Activated CD8-positive, alpha-beta memory T cell treated with anti-CD3 and anti-CD28 coated beads, Interleukin-2, amount 10 ng/mL, durations not matched to agents 7 days and 5 days (primary cell): ENCODE measurements at regions of chr6 and their contacts with region 1.

Region 1: DNA sequence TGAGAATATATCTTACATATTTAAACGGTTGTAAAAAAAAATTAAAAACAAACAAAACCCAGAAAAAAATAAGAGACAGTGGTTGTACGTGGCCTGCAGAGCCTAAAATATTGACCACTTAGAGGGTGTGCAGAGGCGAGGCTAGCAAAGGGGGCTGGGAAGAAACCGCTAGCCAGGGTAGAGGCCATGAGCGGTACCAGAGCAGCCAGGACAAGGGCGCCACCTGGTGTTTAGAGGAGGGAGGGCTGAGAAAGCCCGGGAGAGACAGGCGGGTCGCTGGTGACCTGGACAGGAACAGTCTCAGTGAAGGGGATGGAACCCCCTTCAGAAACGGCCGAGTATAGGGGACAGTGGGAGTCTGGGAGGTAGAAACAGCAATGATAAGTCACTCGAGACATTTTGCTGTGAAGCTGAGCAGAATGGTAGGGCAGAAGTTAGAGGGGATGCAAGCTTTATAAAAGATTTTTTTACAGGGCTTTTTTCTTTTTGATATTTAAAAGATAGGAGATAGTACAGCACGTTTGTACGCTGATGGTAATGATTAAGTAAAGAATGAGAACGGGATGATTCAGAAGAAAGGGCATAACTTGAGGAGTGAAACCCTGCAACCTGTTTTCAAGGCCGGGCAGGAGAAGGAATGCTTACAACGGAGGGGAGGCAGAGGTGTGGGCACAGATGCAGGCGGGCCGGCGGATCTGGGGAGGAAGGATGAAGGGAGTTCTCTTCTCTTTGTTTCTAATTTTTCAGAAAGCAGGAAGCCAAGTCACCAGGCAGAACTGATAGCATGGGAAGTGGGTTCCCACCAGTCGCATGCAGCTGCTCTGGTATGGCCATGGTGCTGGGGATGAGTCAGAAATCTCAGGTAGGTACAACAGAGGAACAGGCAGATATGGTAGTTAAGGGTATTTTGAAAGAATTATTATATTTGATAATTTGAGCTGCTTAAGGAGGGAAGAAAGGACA is 76.2 kb downstream of the FAM229B start:
- DNase-seq: peak; percentile 85
- ATAC-seq: peak; percentile 96
- H3K4me3 Mint-ChIP-seq: peak overlapping the region; percentile 45
- H3K27ac Mint-ChIP-seq: peak overlapping the region; percentile 30
- H3K4me1 Mint-ChIP-seq: peaks cover 20% of the 10 kb centered on the region
- H3K27me3 Mint-ChIP-seq: peaks cover 61% of the 10 kb centered on the region

Region 2: GRCh38 chr6:111382476-111383300 is 780.9 kb before region 1 on chr6:
- CTCF ChIA-PET with region 1: no interaction called
- DNase-seq: no peak
- ATAC-seq: no peak
- H3K4me3 Mint-ChIP-seq: no peak overlapping the region
- H3K27ac Mint-ChIP-seq: no peak overlapping the region
- H3K4me1 Mint-ChIP-seq: peaks cover 18% of the 10 kb centered on the region
- H3K27me3 Mint-ChIP-seq: no peaks in the 10 kb centered on the region

Region 3: DNA sequence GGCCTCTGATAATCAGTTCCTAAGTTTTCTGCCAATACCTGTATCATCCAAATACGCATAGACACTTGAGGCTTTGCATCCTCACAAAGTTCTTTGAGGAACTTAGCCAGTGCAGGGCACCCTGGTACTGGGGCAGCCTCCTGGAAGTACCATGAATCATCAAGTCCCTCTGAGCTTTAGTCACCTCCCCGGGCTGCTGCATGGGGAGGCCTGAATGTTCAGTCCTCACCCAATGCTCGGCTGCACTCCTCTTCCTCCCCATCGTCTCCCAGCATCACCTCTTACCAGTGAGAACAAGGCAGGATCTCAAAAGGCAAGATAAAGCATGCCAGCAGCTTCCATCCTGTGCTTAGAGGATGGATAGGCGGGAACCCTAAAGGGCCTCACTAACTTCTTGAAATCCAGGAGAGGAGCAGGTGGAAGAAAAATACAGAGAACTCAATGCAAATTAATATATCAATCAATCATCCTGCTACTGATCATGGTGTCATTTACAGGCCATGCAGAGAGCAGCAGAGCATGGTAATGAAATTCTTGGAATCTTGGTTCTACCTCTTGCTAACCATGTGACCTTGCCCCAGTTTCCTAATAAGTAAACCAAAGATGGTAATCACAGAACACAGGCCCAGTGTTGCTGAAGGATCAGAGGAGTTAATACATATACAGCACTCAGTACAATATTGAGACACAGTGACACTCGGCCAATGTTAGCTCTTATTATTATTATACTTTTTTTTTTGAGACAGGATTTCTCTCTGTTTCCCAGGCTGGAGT is 114.4 kb before region 1 on chr6:
- CTCF ChIA-PET with region 1: interaction called, 12 read pairs
- DNase-seq: no peak
- ATAC-seq: peak; percentile 20
- H3K4me3 Mint-ChIP-seq: no peak overlapping the region
- H3K27ac Mint-ChIP-seq: no peak overlapping the region
- H3K4me1 Mint-ChIP-seq: peaks cover 6% of the 10 kb centered on the region
- H3K27me3 Mint-ChIP-seq: no peaks in the 10 kb centered on the region

Region 4: DNA sequence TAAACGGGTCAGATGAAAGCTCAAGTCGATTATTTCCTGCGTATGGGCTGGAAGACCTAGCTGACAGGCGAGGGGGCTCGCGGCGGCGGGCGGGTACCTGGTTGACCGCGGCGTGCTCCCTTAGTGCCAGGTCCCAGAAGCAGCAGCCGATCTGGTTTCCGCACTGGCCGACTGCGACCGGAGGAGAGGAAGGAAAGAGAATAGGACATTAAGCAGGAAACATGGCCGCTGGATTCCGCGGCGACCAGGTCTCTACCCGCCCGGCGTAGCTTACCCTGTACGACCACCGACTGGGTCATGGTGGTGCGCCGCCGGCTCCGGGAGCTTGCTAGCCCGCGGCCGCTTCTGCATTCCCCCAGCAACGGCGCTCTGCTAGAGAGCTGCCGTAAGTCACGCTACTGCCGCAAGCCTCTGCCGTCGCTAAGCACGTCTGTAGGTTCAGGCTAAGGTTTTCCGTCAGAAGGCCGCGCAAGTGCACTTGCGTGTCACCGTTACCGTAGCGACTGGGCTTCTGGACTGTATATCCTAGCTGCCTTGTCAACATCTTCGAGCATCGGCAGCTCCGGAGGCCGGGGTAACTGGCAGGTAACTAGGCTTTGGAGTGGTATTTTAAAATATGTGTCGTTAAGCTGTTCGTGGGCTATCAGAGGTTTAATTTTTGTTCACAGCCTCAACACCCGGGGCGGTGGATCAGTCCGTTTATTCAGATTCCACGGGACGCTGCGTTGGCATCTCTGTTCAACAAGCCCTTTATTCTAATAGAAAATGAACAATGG is 76.3 kb before region 1 on chr6 and contains the starts of genes FAM229B and TUBE1:
- CTCF ChIA-PET with region 1: interaction called, 66 read pairs
- DNase-seq: peak; percentile 96
- ATAC-seq: peak; percentile 95
- H3K4me3 Mint-ChIP-seq: no peak within 1 kb of the TSS
- H3K27ac Mint-ChIP-seq: no peak within 1 kb of the TSS
- H3K4me1 Mint-ChIP-seq: peaks cover 7% of the 10 kb centered on the region
- H3K27me3 Mint-ChIP-seq: peaks cover 30% of the 10 kb centered on the region
- total RNA-seq, gene FAM229B: 4.1 to 4.5 TPM
- total RNA-seq, gene TUBE1: 20.7 to 28.7 TPM

Region 5: DNA sequence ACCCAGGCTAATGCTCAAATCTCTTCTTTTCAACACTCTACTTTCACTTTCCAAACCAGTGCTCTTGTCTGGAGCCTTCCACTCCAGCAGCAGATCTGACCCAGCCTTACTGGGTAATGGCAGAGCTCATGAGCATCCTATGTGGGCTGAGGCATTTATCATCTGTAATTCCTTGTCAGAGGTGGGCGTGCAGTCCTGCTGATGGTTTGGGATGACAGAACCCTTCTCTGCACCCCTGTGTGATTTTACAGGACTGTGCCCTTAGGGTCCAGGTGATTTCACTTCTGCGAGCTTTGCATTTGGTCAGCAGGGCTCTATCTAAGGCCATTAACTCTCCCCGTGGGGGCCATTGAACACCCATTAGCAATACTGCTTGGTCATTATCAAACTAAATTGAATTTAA is 35.4 kb after region 1 on chr6:
- CTCF ChIA-PET with region 1: no interaction called
- DNase-seq: no peak
- ATAC-seq: no peak
- H3K4me3 Mint-ChIP-seq: no peak overlapping the region
- H3K27ac Mint-ChIP-seq: no peak overlapping the region
- H3K4me1 Mint-ChIP-seq: no peaks in the 10 kb centered on the region
- H3K27me3 Mint-ChIP-seq: peaks cover 56% of the 10 kb centered on the region

Region 6: DNA sequence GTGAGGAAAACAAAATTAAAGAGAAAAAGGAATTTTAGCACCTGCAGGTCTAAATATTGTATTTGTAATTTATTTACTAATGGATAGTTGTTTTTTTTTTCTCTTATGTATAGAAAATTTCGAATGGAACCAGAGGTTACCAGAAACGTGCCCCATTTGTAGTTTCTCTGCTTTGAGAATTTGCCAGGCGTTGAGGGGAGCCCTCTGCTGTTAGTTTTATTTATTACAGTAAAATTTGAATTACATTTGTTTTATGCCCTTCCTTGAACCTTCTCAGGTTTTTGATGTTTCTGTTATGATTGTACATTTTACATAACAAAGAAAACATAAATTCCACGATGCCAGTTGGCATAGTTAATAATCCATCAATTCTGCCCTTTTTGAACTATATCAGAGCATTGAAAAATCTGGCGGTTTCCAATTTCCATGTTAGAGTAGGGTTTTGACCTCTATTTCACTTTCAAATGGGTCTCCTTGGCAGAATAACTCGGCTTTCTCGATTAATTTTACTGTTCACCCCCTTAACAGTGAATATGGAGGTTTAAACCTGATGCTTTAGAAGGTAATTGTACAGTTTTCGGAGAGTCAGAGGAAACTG is 148.5 kb after region 1 on chr6:
- CTCF ChIA-PET with region 1: interaction called, 11 read pairs
- DNase-seq: no peak
- ATAC-seq: no peak
- H3K4me3 Mint-ChIP-seq: no peak overlapping the region
- H3K27ac Mint-ChIP-seq: no peak overlapping the region
- H3K4me1 Mint-ChIP-seq: no peaks in the 10 kb centered on the region
- H3K27me3 Mint-ChIP-seq: peaks cover 56% of the 10 kb centered on the region